Activated CD8-positive, alpha-beta T cell treated with anti-CD3 and anti-CD28 coated beads for 36 hours (primary cell): ENCODE measurements at regions of chr19 and their contacts with region 1.

Region 1: DNA sequence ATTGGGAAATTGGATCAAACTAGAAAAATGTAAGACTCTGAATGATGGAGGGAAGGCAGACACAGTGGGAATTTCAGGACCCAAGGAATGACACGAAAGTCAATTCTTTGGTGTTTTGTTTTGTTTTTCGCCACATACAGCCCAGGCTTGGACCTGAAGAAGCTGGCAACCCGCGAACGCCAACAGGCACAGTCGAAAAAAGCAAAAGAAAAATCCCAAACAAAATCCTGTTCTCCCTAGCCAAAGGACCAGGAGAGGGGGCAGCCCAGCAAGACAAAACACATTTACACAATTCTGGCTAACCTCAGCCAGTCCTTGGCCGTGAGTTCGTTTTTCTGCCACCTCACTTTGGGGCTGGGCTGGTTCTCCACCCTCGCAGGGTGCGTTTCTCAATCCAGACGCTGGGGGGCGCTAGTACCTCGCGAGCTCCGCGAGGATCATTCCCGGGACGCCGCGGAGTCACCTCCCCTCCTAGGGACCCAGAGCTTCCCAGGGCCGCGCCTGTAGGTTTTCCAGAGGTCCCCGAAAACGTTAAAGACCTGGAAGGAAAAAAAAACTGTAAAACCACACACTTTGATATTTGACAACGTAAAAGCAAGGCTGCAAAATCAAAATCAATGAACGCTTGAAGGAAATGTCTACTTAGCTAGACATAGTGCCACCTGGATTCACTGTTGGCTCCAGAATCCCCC is 34.9 kb upstream of the TPM4 start:
- DNase-seq: peak; percentile 77
- ATAC-seq: peak; percentile 89
- H3K4me3 Mint-ChIP-seq: no peak overlapping the region
- H3K27ac Mint-ChIP-seq: no peak overlapping the region
- H3K4me1 Mint-ChIP-seq: peaks cover 9% of the 10 kb centered on the region
- H3K27me3 Mint-ChIP-seq: no peaks in the 10 kb centered on the region
- CTCF ChIP-seq: peak; percentile 99

Region 2: DNA sequence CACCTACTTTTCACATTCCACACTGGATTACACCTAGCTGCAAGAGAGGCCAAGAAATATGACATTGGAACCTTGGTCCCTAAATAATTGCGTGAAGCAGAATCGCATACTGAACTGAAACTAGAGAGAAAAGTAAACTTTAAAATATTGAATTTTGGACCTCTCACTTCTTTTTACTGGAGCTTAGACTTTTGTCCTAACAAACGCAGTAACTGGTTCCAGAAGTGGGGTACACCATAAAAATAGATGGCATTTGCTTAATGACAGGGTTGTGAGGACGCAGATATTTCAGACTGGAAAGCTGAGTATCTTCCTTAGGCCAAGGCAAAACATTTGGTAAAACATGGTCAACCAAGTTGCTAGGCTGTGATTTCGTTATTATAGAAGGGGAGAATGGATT is 15.6 kb after region 1 on chr19:
- CTCF ChIA-PET with region 1: interaction called, 61 read pairs
- POLR2A ChIA-PET with region 1: no interaction called
- intact Hi-C with region 1: no loop called
- DNase-seq: no peak
- ATAC-seq: no peak
- H3K4me3 Mint-ChIP-seq: no peak overlapping the region
- H3K27ac Mint-ChIP-seq: no peak overlapping the region
- H3K4me1 Mint-ChIP-seq: peaks cover 6% of the 10 kb centered on the region
- H3K27me3 Mint-ChIP-seq: no peaks in the 10 kb centered on the region
- CTCF ChIP-seq: no peak

Region 3: GRCh38 chr19:16088351-16089009 is 47.0 kb after region 1 on chr19:
- CTCF ChIA-PET with region 1: interaction called, 12 read pairs
- POLR2A ChIA-PET with region 1: no interaction called
- intact Hi-C with region 1: no loop called
- DNase-seq: no peak
- ATAC-seq: no peak
- H3K4me3 Mint-ChIP-seq: no peak overlapping the region
- H3K27ac Mint-ChIP-seq: no peak overlapping the region
- H3K4me1 Mint-ChIP-seq: peaks cover 32% of the 10 kb centered on the region
- H3K27me3 Mint-ChIP-seq: no peaks in the 10 kb centered on the region
- CTCF ChIP-seq: no peak

Region 4: GRCh38 chr19:16111160-16111908 is 69.9 kb after region 1 on chr19 and contains the start of gene RAB8A:
- CTCF ChIA-PET with region 1: interaction called, 20 read pairs
- POLR2A ChIA-PET with region 1: interaction called, 3 read pairs
- intact Hi-C with region 1: no loop called
- DNase-seq: peak; percentile 99
- ATAC-seq: peak; percentile 93
- H3K4me3 Mint-ChIP-seq: peak within 1 kb of the TSS; percentile 95
- H3K27ac Mint-ChIP-seq: peak within 1 kb of the TSS; percentile 98
- H3K4me1 Mint-ChIP-seq: peaks cover 35% of the 10 kb centered on the region
- H3K27me3 Mint-ChIP-seq: no peaks in the 10 kb centered on the region
- CTCF ChIP-seq: peak; percentile 92
- total RNA-seq, gene RAB8A: 123 to 128 TPM

Region 5: DNA sequence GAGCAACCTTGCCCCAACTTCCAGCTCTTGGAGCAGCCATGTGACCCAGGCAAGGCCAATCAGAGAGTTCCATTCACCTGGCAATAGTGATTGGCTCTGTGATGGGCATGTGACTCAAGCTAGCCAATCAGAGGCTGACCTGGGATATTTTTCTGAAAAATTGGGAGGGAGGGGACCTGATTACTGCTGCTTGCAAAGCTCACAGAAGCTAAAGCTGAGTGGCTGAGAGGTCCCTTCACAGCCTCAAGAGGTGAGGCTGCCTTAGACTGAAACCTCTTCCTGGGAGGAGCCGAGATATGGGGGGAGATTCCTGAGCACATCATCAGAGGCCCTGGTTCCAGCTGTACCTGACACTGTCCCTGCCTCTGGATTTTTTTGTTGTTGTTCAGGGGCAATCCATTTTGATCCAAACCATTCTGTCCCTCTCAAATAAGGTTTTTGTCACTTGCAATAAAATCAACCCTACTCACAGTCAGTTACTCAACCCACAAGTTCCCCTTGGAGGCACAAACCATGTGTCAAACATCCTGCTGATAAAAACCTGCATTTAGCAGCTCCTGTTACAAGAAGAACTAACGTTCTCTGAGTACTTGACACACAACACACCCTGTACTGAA is 127.1 kb after region 1 on chr19:
- CTCF ChIA-PET with region 1: interaction called, 13 read pairs
- POLR2A ChIA-PET with region 1: no interaction called
- intact Hi-C with region 1: no loop called
- DNase-seq: no peak
- ATAC-seq: peak; percentile 47
- H3K4me3 Mint-ChIP-seq: no peak overlapping the region
- H3K27ac Mint-ChIP-seq: peak overlapping the region; percentile 49
- H3K4me1 Mint-ChIP-seq: peaks cover 8% of the 10 kb centered on the region
- H3K27me3 Mint-ChIP-seq: no peaks in the 10 kb centered on the region
- CTCF ChIP-seq: no peak